Activated T-helper 2 cell treated with anti-CD3 and anti-CD28 coated beads, Interferon-gamma antibody, Interleukin-2, Interleukin-4, amounts not matched to agents 10 μg/mL and 5 μg/mL and 100 μg/mL, durations not matched to agents 14 hours and 24 hours and 36 hours (primary cell): ENCODE measurements at regions of chr10 and their contacts with region 1.

Region 1: GRCh38 chr10:101214446-101215396 is 14.5 kb downstream of the LBX1 start:
- DNase-seq: peak; percentile 52
- H3K4me3 Mint-ChIP-seq: no peak overlapping the region
- H3K27ac Mint-ChIP-seq: peak overlapping the region; percentile 1
- H3K4me1 Mint-ChIP-seq: peaks cover 9% of the 10 kb centered on the region
- H3K27me3 Mint-ChIP-seq: peaks cover 76% of the 10 kb centered on the region

Region 2: GRCh38 chr10:100728928-100729861 is 485.5 kb before region 1 on chr10:
- intact Hi-C with region 1: loop called (anchors 5 kb)
- DNase-seq: no peak
- H3K4me3 Mint-ChIP-seq: no peak overlapping the region
- H3K27ac Mint-ChIP-seq: no peak overlapping the region
- H3K4me1 Mint-ChIP-seq: peaks cover 8% of the 10 kb centered on the region
- H3K27me3 Mint-ChIP-seq: peaks cover 87% of the 10 kb centered on the region

Region 3: GRCh38 chr10:101130984-101131961 is 83.4 kb before region 1 on chr10 and contains the start of gene TLX1:
- intact Hi-C with region 1: loop called (anchors 2 kb)
- DNase-seq: no peak
- H3K4me3 Mint-ChIP-seq: no peak within 1 kb of the TSS
- H3K27ac Mint-ChIP-seq: no peak within 1 kb of the TSS
- H3K4me1 Mint-ChIP-seq: peaks cover 6% of the 10 kb centered on the region
- H3K27me3 Mint-ChIP-seq: peaks cover 84% of the 10 kb centered on the region
- total RNA-seq, gene TLX1: not detected in 2 replicates

Region 4: GRCh38 chr10:101238732-101239105 is 24.0 kb after region 1 on chr10:
- intact Hi-C with region 1: loop called (anchors 1 kb)
- DNase-seq: no peak
- H3K4me3 Mint-ChIP-seq: no peak overlapping the region
- H3K27ac Mint-ChIP-seq: no peak overlapping the region
- H3K4me1 Mint-ChIP-seq: peaks cover 5% of the 10 kb centered on the region
- H3K27me3 Mint-ChIP-seq: peaks cover 64% of the 10 kb centered on the region

Region 5: DNA sequence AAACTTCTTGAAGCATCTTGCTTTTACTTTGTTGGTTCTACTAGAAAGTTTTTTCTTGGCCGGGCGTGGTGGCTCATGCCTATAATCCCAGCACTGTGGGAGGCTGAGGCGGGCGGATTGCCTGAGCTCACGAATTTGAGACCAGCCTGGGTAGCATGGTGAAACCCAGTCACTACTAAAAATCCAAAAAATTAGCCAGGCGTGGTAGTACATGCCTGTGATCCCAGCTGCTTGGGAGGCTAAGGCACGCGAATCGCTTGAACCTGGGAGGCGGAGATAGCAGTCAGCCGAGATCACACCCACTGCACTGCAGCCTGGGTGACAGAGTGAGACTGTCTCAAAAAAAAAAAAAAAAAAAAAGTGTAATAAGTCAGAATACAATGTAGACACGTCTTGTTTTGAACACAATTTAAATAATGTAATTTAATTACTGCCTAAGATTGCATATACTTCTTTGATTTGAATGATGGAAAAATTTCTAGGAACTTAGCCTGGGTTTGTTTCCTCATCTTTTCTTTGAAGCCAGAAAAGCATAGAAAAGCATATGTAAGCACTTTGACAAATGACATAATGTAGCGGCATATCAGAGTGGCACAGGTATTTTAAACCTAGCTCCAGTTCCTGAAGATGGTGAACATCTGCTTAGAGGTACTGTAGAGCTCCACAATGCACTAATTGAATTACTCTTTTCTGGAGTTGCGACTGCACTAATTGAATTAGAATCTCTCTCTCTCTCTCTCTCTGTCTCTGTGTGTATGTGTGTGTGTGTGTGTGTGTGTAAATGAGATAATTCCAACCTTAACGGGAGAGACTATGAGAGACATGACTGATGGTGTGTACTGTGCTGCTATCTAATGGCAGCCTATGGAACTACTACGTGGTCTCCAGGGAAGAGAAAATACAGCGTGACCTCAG is 227.1 kb after region 1 on chr10:
- intact Hi-C with region 1: loop called (anchors 5 kb)
- DNase-seq: no peak
- H3K4me3 Mint-ChIP-seq: no peak overlapping the region
- H3K27ac Mint-ChIP-seq: no peak overlapping the region
- H3K4me1 Mint-ChIP-seq: peaks cover 1% of the 10 kb centered on the region
- H3K27me3 Mint-ChIP-seq: peaks cover 8% of the 10 kb centered on the region

Region 6: GRCh38 chr10:101580486-101581399 is 366.0 kb after region 1 on chr10:
- intact Hi-C with region 1: no loop called
- DNase-seq: no peak
- H3K4me3 Mint-ChIP-seq: no peak overlapping the region
- H3K27ac Mint-ChIP-seq: no peak overlapping the region
- H3K4me1 Mint-ChIP-seq: peaks cover 2% of the 10 kb centered on the region
- H3K27me3 Mint-ChIP-seq: no peaks in the 10 kb centered on the region

Region 7: DNA sequence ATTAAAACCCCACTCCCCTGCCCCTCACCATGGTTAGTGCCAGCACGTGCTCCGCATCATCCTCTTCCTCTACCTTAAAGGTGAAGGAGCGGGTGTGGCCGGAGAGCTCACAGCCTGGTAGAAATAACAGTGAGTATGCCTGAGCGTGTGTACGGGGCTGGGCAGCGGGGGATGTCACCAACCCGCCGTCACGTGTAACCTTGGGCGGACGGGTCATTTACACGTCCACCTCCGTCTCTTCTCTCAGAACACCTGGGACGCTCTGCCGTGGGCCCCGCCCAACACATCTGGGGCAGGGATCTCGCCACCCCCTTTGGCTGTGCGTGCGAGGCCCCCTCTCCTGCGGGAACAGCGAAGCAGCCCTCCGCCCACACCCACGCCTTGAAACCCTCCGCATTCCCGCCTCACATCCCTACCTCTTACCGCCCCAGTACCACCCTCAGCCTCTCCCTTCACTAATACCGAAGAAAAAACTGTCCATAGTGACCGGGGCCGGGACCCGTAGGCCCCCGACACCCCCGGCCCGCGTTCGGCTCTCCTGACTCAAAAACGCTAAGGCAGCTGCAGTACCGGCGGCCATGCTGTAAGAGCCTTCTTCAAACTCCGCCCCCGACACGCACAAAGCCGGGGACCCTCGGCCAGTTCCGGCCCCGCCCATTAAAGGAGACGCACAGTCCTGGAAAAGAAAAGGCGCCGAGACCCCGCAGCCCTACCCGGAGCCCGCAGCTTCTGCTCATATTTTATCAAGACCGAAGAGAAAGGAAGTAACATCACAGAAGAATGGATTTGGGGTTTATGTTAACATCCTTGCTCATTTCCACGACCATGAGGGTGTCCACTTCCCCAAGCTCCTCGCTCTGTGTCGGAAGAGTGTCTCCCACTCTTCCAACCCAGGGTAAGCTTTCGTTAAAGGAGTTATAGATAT is 568.4 kb after region 1 on chr10 and contains the start of gene NPM3:
- intact Hi-C with region 1: loop called (anchors 2 kb)
- DNase-seq: peak; percentile 81
- H3K4me3 Mint-ChIP-seq: peak within 1 kb of the TSS; percentile 100
- H3K27ac Mint-ChIP-seq: peak within 1 kb of the TSS; percentile 98
- H3K4me1 Mint-ChIP-seq: peaks cover 40% of the 10 kb centered on the region
- H3K27me3 Mint-ChIP-seq: peaks cover 7% of the 10 kb centered on the region
- total RNA-seq, gene NPM3: 139 and 140 TPM in 2 replicates